HepG2 (cell line): ENCODE measurements at regions of chr2 and their contacts with region 1.

Region 1: GRCh38 chr2:39436592-39437510 is at the start of gene MAP4K3:
- DNase-seq: peak; percentile 96
- ATAC-seq: peak; percentile 85
- H3K4me3 ChIP-seq: peak within 1 kb of the TSS; percentile 92 to 95 (median 93)
- H3K27ac ChIP-seq: peak within 1 kb of the TSS; percentile 94
- H3K4me1 ChIP-seq: peaks cover 62% of the 10 kb centered on the region
- H3K27me3 ChIP-seq: no peaks in the 10 kb centered on the region; a peak in 1 of 5 replicates
- CTCF ChIP-seq: peak; percentile 32
- EP300 ChIP-seq: peak in 1 of 2 experiments; percentile 42; a peak in 1 of 4 replicates
- POLR2A ChIP-seq: peak; percentile 64 to 81
- RAD21 ChIP-seq: peak; percentile 63
- total RNA-seq, gene MAP4K3: 45.9 and 49.6 TPM in 2 replicates

Region 2: DNA sequence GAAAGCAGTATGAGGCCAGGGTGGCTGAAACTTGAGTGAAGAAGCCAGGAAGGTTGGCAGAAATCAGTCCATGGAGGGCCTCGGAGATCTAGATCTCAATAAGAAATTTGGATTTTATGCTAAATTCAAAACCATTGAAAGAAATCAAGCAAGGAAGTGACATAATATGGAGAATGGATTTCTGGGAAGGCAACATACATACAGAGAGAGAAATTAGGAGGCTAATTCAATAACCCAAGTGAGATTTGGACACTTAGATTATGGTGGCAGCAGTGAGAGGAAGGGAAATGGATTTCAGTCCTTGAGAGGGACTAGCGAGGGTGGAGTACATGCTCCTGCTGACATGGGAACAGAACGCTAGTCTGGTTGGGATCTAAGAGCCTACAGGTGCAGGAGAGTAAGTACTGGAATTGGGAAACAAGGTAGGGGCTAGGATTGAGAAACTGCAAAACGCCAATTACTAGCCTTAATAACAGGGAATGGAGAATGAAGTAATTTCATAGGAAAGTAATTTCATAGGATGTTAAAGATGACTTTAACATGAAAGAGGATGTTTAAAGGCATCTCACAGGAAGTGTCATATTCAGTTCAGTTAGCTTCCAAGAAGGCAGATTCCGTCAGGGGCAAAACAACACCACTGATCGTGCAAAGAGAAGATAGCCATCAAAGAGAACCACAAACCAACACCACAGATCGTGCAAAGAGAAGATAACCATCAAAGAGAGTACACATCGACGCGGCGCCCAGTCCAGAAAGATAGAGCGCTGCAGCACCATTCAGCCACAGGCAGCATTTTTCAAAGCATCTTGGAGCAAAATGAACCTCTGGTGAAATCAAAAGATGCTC is 220.3 kb before region 1 on chr2:
- CTCF ChIA-PET with region 1: no interaction called
- POLR2A ChIA-PET with region 1: no interaction called
- in situ Hi-C with region 1: no loop called
- intact Hi-C with region 1: no loop called
- DNase-seq: peak; percentile 78
- ATAC-seq: peak; percentile 89
- H3K4me3 ChIP-seq: peak overlapping the region in 2 of 3 experiments; percentile 24 to 29; a peak in 3 of 6 replicates
- H3K27ac ChIP-seq: no peak overlapping the region
- H3K4me1 ChIP-seq: peaks cover 39% of the 10 kb centered on the region
- H3K27me3 ChIP-seq: no peaks in the 10 kb centered on the region
- CTCF ChIP-seq: 0 out of 2 replicates have a peak, but pooled peaks have one; percentile 7
- EP300 ChIP-seq: peak; percentile 68 to 98
- POLR2A ChIP-seq: no peak
- RAD21 ChIP-seq: no peak

Region 3: DNA sequence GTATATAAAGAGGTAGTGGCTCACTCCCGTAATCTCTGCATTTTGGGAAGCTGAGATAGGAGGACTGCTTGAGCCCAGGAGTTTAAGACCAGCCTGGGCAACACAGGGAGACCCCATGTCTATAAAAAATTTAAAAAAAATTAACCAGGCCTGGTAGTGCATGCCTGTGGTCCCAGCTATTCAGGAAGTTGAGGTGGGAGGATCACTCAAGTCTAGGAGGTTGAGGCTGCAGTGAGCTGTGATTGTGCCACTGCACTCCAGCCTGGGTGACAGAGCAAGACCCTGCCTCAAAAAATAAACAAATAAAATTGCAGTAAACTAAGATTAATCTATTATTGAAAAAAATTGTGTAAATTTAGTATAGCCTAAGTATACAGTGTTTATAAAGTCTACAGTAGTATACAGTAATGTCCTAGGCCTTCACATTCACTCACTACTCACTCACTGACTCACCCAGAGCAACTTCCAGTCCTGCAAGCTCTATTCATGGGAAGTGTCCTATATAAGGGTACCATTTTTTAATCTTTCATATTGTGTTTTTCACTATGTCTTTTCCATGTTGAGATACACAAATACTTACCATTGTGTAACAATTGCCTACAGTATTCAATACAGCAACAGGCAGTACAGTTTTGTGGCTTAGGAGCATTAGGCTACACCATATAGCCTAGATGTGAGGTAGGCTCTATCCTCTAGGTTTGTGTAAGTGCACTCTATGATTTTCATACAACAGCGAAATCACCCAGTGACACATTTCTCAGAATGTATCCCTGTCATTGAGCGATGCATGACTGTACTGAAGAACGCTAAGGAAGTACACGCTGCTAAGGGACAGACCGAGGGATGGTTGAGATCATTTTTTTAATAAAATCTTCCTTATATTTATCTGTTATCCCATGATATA is 10.7 kb after region 1 on chr2:
- CTCF ChIA-PET with region 1: no interaction called
- POLR2A ChIA-PET with region 1: interaction called, 35 read pairs
- in situ Hi-C with region 1: no loop called
- intact Hi-C with region 1: loop called (anchors 1 kb)
- DNase-seq: no peak
- ATAC-seq: peak; percentile 48
- H3K4me3 ChIP-seq: no peak overlapping the region
- H3K27ac ChIP-seq: peak overlapping the region; percentile 45
- H3K4me1 ChIP-seq: peaks cover 46% of the 10 kb centered on the region
- H3K27me3 ChIP-seq: no peaks in the 10 kb centered on the region
- CTCF ChIP-seq: no peak
- EP300 ChIP-seq: no peak
- POLR2A ChIP-seq: no peak
- RAD21 ChIP-seq: no peak